ENCODE measurements at regions of chr4 and their contacts with region 1.

Region 1: DNA sequence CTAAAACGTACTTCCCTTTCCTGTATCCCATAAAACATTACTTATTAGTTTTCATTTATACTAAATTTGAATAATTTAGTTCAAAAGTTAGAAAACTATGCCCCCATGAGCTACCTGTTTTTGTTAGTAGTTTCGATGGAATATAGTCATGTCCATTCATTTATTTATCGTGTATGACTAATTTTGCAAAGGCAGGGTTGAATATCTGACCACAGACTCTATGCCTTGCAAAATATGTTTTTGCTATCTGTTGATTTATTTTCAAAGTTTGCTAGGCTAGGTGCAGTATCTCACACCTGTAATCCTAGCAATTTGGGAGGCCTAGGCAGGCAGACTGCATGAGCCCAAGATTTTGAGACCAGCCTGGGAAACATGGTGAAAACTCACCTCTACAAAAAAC is 78.4 kb downstream of the PDS5A start:
- H3K4me3 Mint-ChIP-seq: no peak overlapping the region
- H3K27ac Mint-ChIP-seq: no peak overlapping the region
- H3K4me1 Mint-ChIP-seq: no peaks in the 10 kb centered on the region
- H3K27me3 Mint-ChIP-seq: no peaks in the 10 kb centered on the region

Region 2: DNA sequence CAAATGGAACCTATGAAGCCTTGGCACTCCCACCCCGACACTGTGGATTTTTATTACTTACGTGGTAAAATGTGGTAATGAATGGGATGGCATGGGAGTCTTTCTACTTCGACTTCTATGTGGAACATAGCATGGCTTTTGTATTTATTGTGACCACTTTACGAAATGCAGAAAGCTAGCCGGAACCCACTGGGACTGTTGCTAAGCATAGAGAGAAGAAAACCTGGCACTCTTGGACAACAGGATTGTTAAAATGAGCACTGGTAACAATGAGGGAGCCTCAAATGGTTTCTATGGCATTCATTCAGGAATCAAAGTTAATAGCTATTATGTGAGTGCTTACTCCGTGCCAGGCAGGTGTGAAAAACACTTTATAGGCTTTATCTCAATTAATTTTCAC is 34.9 kb before region 1 on chr4:
- intact Hi-C with region 1: loop called (anchors 5 kb)
- H3K4me3 Mint-ChIP-seq: no peak overlapping the region
- H3K27ac Mint-ChIP-seq: no peak overlapping the region
- H3K4me1 Mint-ChIP-seq: no peaks in the 10 kb centered on the region
- H3K27me3 Mint-ChIP-seq: no peaks in the 10 kb centered on the region

Measured in dendritic cell treated with granulocyte-macrophage colony-stimulating factor and Interleukin-4, amounts not matched to agents 40 ng/mL and 50 ng/mL, for 4 days (primary cell).